BJ (cell line): ENCODE measurements at regions of chr16 and their contacts with region 1.

Region 1: GRCh38 chr16:85275533-85276249 is 163.4 kb upstream of the CIBAR2 start:
- DNase-seq: no peak
- H3K4me3 ChIP-seq: no peak overlapping the region
- H3K27me3 ChIP-seq: no peaks in the 10 kb centered on the region
- CTCF ChIP-seq: peak; percentile 96

Region 2: GRCh38 chr16:84922351-84923120 is 353.2 kb before region 1 on chr16:
- CTCF ChIA-PET with region 1: no interaction called
- POLR2A ChIA-PET with region 1: no interaction called
- DNase-seq: no peak
- H3K4me3 ChIP-seq: no peak overlapping the region
- H3K27me3 ChIP-seq: peaks cover 3% of the 10 kb centered on the region; the same call in 1 of the 2 replicates
- CTCF ChIP-seq: no peak

Region 3: GRCh38 chr16:85210423-85211169 is 65.1 kb before region 1 on chr16:
- CTCF ChIA-PET with region 1: no interaction called
- POLR2A ChIA-PET with region 1: no interaction called
- DNase-seq: no peak
- H3K4me3 ChIP-seq: no peak overlapping the region
- H3K27me3 ChIP-seq: no peaks in the 10 kb centered on the region
- CTCF ChIP-seq: no peak

Region 4: DNA sequence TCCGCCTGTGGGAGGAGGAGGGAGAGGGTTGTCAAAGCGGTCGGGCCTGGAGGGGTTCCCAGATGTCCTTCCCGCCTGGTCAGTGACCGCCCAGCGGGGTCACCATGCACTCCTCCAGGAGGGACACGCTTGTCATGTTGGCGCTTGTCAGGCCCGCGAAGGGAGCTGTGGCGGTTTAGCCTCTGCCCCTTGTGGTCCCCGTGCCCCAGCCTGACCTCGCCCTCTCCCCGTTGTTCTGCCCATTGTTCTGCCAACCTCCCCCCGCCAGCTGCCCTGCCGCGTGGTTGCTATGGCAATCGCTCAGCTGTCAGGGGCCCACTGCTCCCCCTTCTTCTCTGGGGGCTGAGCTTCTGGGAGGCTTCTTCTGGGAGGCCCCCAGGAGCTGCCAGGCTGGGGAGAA is 17.1 kb before region 1 on chr16:
- CTCF ChIA-PET with region 1: interaction called, 17 read pairs
- POLR2A ChIA-PET with region 1: no interaction called
- DNase-seq: no peak
- H3K4me3 ChIP-seq: no peak overlapping the region
- H3K27me3 ChIP-seq: no peaks in the 10 kb centered on the region
- CTCF ChIP-seq: no peak

Region 5: DNA sequence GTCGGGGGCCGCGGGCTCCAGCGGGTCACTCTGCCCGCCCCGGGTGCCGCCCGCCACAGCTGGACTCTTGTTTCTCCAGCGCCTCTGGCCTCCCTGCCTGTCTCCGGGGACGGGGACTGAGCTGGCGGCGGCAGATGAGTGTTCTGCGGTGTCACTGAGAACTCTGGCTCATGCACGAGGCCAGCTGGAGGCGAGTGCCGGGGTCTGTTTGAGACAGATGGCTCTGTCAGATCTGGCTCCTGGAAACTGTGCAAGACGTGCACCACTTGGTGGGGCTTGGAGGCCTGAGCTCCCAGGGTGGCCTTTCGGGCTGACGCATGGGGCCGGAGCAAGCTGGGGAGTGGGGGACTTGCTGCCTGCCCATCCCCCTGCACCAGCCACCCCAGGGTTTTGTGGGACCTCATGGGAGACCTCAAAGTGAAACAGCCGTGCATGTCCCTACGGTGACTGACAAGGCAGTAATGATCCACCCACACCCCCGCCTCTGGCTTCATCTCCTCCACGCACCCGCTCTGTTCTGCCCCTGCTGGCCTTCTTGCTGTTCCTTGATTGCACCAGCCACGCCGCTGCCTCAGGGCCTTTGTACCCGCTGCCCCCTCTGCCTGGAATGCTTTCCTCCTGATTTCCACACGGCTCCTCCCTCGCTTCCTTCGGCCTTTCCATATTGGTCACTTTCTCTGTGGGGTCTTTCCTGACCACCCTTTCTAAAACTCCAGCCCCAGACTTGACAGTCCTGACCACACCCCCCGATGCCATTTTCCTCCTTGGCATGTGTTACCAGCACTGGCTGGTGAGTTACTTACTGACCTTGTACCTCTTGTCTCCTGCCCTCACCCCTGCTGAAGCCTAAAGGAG is 11.5 kb after region 1 on chr16:
- CTCF ChIA-PET with region 1: interaction called, 31 read pairs
- POLR2A ChIA-PET with region 1: no interaction called
- DNase-seq: no peak
- H3K4me3 ChIP-seq: no peak overlapping the region
- H3K27me3 ChIP-seq: no peaks in the 10 kb centered on the region
- CTCF ChIP-seq: peak; percentile 37; the same call in 1 of the 2 replicates

Region 6: GRCh38 chr16:85473909-85474620 is 198.4 kb after region 1 on chr16:
- CTCF ChIA-PET with region 1: no interaction called
- POLR2A ChIA-PET with region 1: no interaction called
- DNase-seq: no peak
- H3K4me3 ChIP-seq: no peak overlapping the region
- H3K27me3 ChIP-seq: no peaks in the 10 kb centered on the region
- CTCF ChIP-seq: peak; percentile 21; the same call in 1 of the 2 replicates